ENCODE measurements at regions of chr11 and their contacts with region 1.

Region 1: GRCh38 chr11:9748361-9748970 is 84.6 kb downstream of the SWAP70 start:
- DNase-seq: peak; percentile 75
- H3K4me3 Mint-ChIP-seq: no peak overlapping the region
- H3K27ac Mint-ChIP-seq: no peak overlapping the region
- H3K4me1 Mint-ChIP-seq: peaks cover 6% of the 10 kb centered on the region
- H3K27me3 Mint-ChIP-seq: no peaks in the 10 kb centered on the region
- CTCF ChIP-seq: peak; percentile 90

Region 2: DNA sequence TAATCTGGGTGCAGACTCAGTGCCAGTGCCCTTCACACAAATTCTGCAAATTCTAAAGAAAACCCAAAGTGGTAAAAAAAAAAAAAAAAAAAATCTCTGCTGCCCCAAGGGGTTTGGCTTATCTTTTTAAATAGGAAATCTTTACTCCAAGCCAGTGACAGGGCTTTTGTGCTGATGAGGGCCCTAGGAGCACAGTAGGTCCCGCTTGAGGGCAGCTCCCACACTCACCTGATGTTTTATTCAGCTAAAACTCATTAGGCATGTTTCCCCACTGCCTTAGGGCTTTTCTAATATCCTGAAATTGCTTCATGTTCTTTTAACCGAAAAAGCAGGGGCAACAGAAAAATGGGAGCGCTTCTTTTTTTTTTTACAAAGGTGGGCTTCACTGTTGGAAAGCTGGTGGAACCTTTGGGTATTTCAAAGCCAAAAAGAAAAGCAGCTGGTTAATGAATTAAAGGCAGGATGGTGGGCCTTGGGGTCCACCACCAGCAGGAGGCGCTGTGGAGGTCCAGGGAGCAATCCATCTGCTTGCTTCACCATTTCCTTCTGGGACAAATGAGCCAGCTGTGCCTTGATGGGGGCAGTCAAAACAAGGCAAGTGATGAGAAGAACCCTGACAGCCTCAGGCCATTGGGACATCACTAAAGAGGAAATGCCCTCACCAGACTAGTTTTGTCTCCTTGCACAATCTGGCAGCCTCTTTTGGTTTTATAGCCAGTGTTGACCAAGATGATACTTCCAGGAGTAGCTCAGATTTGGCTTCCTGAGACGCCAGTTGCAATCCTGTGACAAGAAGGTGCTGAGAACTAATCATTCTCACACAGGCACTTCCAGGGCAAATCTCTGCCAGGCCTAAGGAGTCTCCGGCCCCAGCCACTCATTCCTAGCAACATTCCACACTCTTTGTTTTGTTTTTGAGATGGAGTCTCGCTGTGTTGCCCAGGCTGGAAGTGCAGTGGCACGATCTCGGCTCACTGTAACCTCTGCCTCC is 213.4 kb before region 1 on chr11:
- CTCF ChIA-PET with region 1: interaction called, 12 read pairs
- POLR2A ChIA-PET with region 1: no interaction called
- intact Hi-C with region 1: loop called (anchors 2 kb)
- DNase-seq: peak; percentile 94
- H3K4me3 Mint-ChIP-seq: no peak overlapping the region
- H3K27ac Mint-ChIP-seq: peak overlapping the region; percentile 49
- H3K4me1 Mint-ChIP-seq: no peaks in the 10 kb centered on the region
- H3K27me3 Mint-ChIP-seq: no peaks in the 10 kb centered on the region
- CTCF ChIP-seq: peak; percentile 91

Region 3: GRCh38 chr11:9565822-9566560 is 182.5 kb before region 1 on chr11:
- CTCF ChIA-PET with region 1: interaction called, 6 read pairs
- POLR2A ChIA-PET with region 1: interaction called, 10 read pairs
- intact Hi-C with region 1: no loop called
- DNase-seq: peak; percentile 99
- H3K4me3 Mint-ChIP-seq: no peak overlapping the region
- H3K27ac Mint-ChIP-seq: peak overlapping the region; percentile 100
- H3K4me1 Mint-ChIP-seq: peaks cover 43% of the 10 kb centered on the region
- H3K27me3 Mint-ChIP-seq: no peaks in the 10 kb centered on the region
- CTCF ChIP-seq: no peak

Region 4: DNA sequence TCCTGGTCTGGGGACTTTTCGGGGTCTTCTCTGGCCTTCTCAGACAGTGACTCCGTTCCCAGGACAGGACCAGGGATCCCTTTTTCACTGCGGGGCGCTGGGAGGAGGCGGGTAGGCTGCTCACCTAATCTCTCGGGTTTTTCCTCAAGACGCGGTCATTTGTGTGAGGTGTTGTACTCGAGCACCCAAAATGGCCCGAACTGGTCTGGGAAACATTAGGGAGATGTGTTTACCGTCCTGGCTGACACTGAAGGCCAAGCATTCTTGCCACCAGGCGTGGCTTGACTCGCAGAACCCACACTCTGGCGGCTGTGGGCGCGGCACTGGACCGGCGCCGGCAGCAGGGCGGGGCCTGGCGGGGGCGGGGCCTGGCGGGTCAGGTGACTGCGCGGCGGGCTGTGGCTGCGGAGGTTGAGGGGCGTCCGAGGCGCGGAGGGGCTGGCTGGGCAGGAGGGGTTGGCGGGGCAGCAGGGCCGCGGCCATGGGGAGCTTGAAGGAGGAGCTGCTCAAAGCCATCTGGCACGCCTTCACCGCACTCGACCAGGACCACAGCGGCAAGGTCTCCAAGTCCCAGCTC is 84.7 kb before region 1 on chr11 and contains the start of gene SWAP70:
- CTCF ChIA-PET with region 1: no interaction called
- POLR2A ChIA-PET with region 1: interaction called, 8 read pairs
- intact Hi-C with region 1: loop called (anchors 1 kb)
- DNase-seq: peak; percentile 75
- H3K4me3 Mint-ChIP-seq: peak within 1 kb of the TSS; percentile 91
- H3K27ac Mint-ChIP-seq: peak within 1 kb of the TSS; percentile 88
- H3K4me1 Mint-ChIP-seq: peaks cover 6% of the 10 kb centered on the region
- H3K27me3 Mint-ChIP-seq: no peaks in the 10 kb centered on the region
- CTCF ChIP-seq: peak; percentile 33
- total RNA-seq, gene SWAP70: 13.0 and 24.2 TPM in 2 replicates

Measured in MCF 10A (cell line).